Naive thymus-derived CD4-positive, alpha-beta T cell (primary cell): ENCODE measurements at regions of chr9 and their contacts with region 1.

Region 1: GRCh38 chr9:112074250-112075008 is 100.7 kb downstream of the SUSD1 start:
- DNase-seq: peak in 8 of 9 donors; percentile 53 to 81 (median 74)
- ATAC-seq: peak; percentile 90
- H3K4me3 ChIP-seq: no peak overlapping the region
- H3K4me3 Mint-ChIP-seq: peak overlapping the region in 9 of 10 donors; percentile 64 to 79 (median 72)
- H3K27ac ChIP-seq: no peak overlapping the region
- H3K27ac Mint-ChIP-seq: peak overlapping the region in 8 of 9 donors; percentile 6 to 85 (median 47)
- H3K4me1 ChIP-seq: peaks cover 3 to 16% of the 10 kb centered on the region in 2 donors
- H3K4me1 Mint-ChIP-seq: peaks cover 14 to 38% (median 28%) of the 10 kb centered on the region in 7 donors
- H3K27me3 ChIP-seq: no peaks in the 10 kb centered on the region
- H3K27me3 Mint-ChIP-seq: no peaks in the 10 kb centered on the region

Region 2: GRCh38 chr9:111691672-111692329 is 382.6 kb before region 1 on chr9:
- CTCF ChIA-PET with region 1: no interaction called
- POLR2A ChIA-PET with region 1: no interaction called
- intact Hi-C with region 1: loop called in 1 of 2 experiments (anchors 1 kb)
- DNase-seq: peak in 5 of 9 donors; percentile 8 to 34 (median 11)
- ATAC-seq: no peak
- H3K4me3 ChIP-seq: no peak overlapping the region
- H3K4me3 Mint-ChIP-seq: no peak overlapping the region
- H3K27ac ChIP-seq: no peak overlapping the region
- H3K27ac Mint-ChIP-seq: no peak overlapping the region
- H3K4me1 ChIP-seq: no peaks in the 10 kb centered on the region
- H3K4me1 Mint-ChIP-seq: peaks cover 0 to 5% (median 0%) of the 10 kb centered on the region in 7 donors
- H3K27me3 ChIP-seq: no peaks in the 10 kb centered on the region
- H3K27me3 Mint-ChIP-seq: no peaks in the 10 kb centered on the region

Region 3: DNA sequence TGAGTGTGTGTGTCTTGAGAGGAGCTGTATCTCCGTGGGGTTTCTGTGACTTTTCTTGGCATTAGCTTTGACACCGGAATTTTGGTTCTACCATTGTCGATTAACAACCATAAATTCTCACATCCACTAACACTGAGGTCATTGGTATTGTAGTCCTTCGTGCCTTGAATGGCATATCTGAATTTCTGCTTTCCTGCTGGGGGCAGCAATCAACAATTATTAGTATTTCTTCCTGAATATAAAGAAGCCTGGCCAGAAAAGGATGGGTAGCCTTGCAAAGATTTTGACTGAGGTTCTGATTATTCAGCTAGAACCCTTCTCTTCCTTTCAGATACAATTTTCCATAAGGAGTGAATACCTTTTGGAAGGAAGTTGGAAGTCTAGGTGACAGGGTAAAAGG is 246.2 kb before region 1 on chr9:
- CTCF ChIA-PET with region 1: interaction called, 10 read pairs
- POLR2A ChIA-PET with region 1: no interaction called
- intact Hi-C with region 1: loop called (anchors 1 kb)
- DNase-seq: peak in 2 of 9 donors; percentile 3 to 6
- ATAC-seq: no peak
- H3K4me3 ChIP-seq: no peak overlapping the region
- H3K4me3 Mint-ChIP-seq: no peak overlapping the region
- H3K27ac ChIP-seq: no peak overlapping the region
- H3K27ac Mint-ChIP-seq: no peak overlapping the region
- H3K4me1 ChIP-seq: no peaks in the 10 kb centered on the region
- H3K4me1 Mint-ChIP-seq: peaks cover 0 to 2% (median 0%) of the 10 kb centered on the region in 7 donors
- H3K27me3 ChIP-seq: no peaks in the 10 kb centered on the region
- H3K27me3 Mint-ChIP-seq: peaks cover 0 to 8% (median 0%) of the 10 kb centered on the region in 5 donors

Region 4: DNA sequence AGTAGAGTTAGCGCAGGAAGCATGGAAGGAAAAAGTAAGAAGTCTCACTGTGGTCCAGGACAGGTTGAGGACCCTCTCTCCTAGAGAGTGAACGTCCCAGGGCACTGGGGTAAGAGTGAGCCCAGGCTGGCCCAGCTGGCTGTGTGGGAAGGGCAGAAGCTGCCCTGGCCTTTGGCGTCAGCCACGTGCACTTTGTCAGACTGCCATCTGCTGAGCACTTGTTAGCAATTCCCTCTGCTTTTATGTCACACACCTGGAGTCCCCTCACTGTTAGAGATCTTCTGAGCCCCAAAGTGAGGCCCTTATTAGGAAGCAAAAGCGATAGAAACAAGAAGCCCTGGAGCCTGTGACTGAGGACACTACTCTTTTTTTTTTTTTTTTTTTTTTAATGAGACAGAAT is 98.7 kb before region 1 on chr9:
- CTCF ChIA-PET with region 1: interaction called, 9 read pairs
- POLR2A ChIA-PET with region 1: interaction called, 4 read pairs
- intact Hi-C with region 1: loop called in 1 of 2 experiments (anchors 1 kb)
- DNase-seq: peak in 2 of 9 donors; percentile 9 to 14
- ATAC-seq: peak; percentile 47
- H3K4me3 ChIP-seq: no peak overlapping the region
- H3K4me3 Mint-ChIP-seq: no peak overlapping the region
- H3K27ac ChIP-seq: no peak overlapping the region
- H3K27ac Mint-ChIP-seq: no peak overlapping the region
- H3K4me1 ChIP-seq: no peaks in the 10 kb centered on the region
- H3K4me1 Mint-ChIP-seq: peaks cover 2 to 20% (median 10%) of the 10 kb centered on the region in 7 donors
- H3K27me3 ChIP-seq: no peaks in the 10 kb centered on the region
- H3K27me3 Mint-ChIP-seq: peaks cover 0 to 13% (median 0%) of the 10 kb centered on the region in 5 donors